ENCODE measurements at regions of chr3 and their contacts with region 1.

Region 1: GRCh38 chr3:193875601-193876321 is 260.2 kb upstream of the HES1 start:
- DNase-seq: no peak
- H3K4me3 ChIP-seq: no peak overlapping the region
- H3K27me3 ChIP-seq: peaks cover 19% of the 10 kb centered on the region
- CTCF ChIP-seq: no peak

Region 2: GRCh38 chr3:193762657-193763056 is 113.1 kb before region 1 on chr3:
- CTCF ChIA-PET with region 1: no interaction called
- POLR2A ChIA-PET with region 1: interaction called, 10 read pairs
- DNase-seq: no peak
- H3K4me3 ChIP-seq: no peak overlapping the region
- H3K27me3 ChIP-seq: no peaks in the 10 kb centered on the region; the same call in none of the 2 replicates
- CTCF ChIP-seq: no peak

Region 3: GRCh38 chr3:193865339-193865738 is 10.4 kb before region 1 on chr3:
- CTCF ChIA-PET with region 1: no interaction called
- POLR2A ChIA-PET with region 1: no interaction called
- DNase-seq: no peak
- H3K4me3 ChIP-seq: no peak overlapping the region
- H3K27me3 ChIP-seq: no peaks in the 10 kb centered on the region
- CTCF ChIP-seq: no peak

Region 4: DNA sequence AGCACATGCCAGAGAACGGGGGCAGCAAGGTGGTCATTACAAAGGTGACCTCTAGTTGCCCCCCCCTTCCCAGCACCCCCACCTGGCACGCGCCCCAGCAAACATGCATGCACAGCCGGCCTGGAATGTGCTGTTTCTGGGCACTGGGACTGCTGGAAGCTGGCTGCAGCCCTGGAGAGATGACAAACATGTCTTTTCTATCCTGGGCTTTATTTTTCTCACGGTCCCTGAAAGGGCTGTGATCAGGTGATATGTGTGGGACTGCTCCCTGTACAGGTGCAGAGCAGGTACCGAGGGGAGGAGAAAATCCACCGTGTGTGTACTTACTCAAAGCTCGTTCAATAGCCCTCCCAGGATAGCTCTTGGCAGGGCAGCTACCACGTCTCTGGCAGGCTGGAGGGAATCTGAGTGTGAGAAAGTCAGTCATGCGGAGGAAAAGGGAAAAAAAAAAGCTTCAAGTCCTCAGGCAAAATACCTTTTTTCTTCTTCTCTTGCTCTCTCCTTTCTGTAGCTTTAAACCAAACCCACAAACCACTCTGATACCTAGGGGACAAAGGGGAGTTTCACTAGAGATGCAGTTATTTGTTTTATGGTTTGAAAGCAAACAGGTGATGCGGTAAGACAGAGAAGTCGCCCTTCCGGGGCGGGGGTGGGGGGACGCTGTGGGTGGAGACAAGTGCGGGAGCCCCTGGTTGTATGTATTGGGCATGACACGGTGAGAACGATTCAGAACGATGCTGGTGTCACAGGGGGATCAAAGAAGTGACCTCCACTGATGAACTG is 255.2 kb after region 1 on chr3:
- CTCF ChIA-PET with region 1: no interaction called
- POLR2A ChIA-PET with region 1: no interaction called
- DNase-seq: no peak
- H3K4me3 ChIP-seq: no peak overlapping the region
- H3K27me3 ChIP-seq: peaks cover 3% of the 10 kb centered on the region; the same call in 1 of the 2 replicates
- CTCF ChIP-seq: no peak